ENCODE measurements at regions of chr9 and their contacts with region 1.

Region 1: DNA sequence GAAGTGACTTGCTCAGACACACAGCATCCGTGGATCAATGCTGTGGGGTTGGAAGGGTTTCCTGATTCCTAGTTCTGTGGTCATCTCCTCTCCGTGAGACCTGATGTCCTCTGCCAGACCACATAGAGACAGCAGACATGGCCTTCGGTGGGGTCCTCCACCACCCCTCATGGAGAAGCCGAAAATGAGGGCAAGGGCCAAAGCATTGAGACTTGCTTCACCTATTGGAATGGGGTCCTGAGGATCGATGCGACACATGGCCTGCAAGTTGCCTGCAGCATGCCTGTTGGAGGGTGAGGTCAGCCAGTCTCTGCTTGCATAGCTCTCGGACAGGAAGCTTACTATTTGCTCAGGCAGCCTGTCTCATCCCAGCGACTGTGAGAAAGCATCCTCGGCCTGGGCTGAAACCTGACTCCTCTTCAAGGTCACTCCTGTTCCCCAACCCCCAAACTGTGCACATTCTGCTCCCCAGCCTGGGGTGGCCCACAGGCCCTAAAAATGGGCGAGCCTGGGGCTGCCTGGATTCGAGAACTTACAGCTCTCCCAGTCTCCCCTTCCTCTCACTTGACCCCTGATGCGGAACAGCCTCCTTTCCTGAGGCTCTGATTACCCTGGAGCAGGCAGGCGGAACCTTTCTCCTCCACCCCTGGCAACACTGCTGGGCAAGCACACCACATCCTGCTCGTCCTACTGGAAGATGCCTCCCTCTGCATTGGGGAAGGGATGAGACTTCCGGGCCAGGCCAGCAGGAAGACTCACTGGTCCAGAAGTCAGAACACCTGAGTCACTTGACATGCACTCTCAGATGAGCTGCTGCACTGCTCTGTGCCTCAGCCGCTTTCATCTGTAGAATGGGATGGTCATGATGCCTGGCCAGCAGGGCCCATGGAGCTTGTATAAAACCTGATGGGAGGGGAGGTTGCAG is 186.9 kb downstream of the RGS3 start:
- DNase-seq: no peak

Region 2: DNA sequence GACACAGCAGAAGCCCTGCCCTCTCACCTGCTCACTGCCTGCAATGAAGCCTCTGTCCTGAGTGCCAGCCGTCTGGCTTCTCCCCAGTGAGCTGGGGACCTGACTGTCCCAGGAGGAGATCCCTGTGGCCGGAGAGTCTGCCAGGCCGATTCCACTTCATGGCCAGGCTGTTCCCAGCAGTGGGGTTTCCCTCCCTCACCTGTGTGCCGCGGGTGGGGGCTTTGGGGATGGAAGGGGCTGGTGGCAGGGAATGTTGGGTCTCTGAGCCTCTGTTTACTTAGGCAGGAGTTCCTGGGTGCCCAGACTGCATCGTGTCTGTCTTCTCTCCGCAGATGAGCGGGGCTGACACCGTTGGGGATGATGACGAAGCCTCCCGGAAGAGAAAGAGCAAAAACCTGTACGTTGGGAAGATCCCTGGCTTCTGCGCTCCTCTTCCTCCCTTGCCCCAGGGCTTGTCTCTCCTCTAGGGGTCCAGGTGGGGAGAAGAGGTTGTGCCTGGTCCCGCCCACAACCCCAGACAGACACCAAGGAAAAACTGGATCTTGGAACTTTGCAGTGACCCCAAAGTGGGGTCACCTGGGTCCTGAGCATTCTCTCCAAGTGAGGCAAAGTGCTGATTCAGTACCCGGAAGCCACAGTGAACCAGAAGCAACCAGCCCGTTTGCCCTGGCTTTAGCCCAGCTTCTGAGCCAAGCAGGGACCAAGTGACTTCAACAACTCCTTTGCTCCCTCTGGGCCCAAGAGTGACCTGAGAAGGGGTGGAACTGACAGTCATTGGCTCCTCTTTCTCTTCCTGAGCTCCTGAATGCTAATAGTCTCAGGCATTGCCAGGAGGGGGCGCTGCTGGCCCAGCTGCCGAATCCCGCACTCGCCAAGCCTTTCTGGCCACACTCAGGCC is 59.2 kb before region 1 on chr9:
- in situ Hi-C with region 1: loop called (anchors 5 kb)
- DNase-seq: peak; percentile 62